IMR-90 (cell line): ENCODE measurements at regions of chr16 and their contacts with region 1.

Region 1: GRCh38 chr16:72537664-72538063 is 365.7 kb upstream of the PMFBP1 start:
- DNase-seq: peak; percentile 56
- ATAC-seq: peak; percentile 71
- H3K4me3 ChIP-seq: no peak overlapping the region
- H3K27ac ChIP-seq: no peak overlapping the region
- H3K4me1 ChIP-seq: peaks cover 2% of the 10 kb centered on the region; the same call in 1 of the 2 replicates
- H3K27me3 ChIP-seq: no peaks in the 10 kb centered on the region
- CTCF ChIP-seq: no peak
- POLR2A ChIP-seq: no peak
- RAD21 ChIP-seq: no peak

Region 2: DNA sequence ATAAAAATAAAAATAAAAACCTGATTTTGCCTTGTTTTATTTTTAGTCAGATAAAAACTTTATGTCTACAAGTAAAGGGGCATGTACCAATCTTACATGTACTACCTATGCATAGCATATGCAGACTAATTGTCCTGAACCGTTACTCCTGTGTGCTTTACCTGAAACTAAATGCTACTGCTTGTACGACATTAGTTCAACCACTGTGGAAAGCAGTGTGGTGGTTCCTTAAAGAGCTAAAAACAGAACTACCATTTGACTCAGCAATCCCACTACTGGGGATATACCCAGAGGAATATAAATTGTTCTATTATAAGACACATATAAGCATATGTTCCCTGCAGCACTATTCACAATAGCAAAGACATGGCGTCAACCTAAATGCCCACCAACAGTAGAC is 60.3 kb after region 1 on chr16:
- CTCF ChIA-PET with region 1: no interaction called
- POLR2A ChIA-PET with region 1: interaction called, 15 read pairs
- dilution Hi-C with region 1: no loop called
- in situ Hi-C with region 1: no loop called
- intact Hi-C with region 1: no loop called
- DNase-seq: no peak
- ATAC-seq: no peak
- H3K4me3 ChIP-seq: no peak overlapping the region
- H3K27ac ChIP-seq: no peak overlapping the region
- H3K4me1 ChIP-seq: no peaks in the 10 kb centered on the region
- H3K27me3 ChIP-seq: no peaks in the 10 kb centered on the region
- CTCF ChIP-seq: no peak
- POLR2A ChIP-seq: no peak
- RAD21 ChIP-seq: no peak